HEK293T (cell line): ENCODE measurements at regions of chr5 and their contacts with region 1.

Region 1: DNA sequence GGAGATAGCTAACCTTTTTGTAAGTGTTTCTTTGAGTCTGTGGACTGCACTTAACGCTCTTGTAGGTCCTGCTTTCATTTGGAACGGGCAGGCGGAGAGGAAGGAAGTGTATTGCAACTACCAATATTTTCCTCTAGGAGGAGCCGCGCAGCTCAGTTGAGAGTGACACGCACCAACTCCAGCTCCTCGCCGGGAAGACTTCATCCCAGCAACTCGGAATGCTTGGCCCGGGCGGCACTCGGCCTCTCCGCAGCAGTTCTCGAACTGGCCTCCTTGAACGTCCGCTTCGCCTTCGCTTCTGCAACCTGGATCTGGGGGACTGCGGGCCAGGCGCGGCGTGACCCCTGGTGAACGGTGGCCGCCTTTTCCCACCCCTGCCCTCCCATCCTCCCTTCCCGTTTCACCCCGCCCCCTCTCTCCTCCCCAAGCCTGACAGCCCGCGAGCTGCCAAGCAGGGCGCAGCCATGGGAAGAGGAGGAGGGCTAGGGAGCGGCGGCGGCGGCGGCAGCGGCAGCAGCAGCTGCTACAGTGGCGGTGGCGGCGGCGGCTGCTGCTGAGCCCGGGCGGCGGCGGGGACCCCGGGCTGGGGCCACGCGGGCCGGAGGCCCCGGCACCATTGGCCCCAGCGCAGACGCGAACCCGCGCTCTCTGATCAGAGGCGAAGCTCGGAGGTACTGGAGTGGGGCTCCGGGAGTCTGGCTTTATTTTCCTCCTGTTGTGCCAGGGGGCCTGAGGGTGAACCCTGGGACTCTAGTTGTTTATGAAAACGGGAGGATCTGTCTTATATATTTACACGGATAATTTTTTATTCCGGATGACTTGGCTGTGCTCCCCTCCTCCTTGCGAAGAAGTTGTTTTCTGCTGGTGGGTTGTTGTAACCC is at the start of gene GHR:
- DNase-seq: peak; percentile 77

Region 2: DNA sequence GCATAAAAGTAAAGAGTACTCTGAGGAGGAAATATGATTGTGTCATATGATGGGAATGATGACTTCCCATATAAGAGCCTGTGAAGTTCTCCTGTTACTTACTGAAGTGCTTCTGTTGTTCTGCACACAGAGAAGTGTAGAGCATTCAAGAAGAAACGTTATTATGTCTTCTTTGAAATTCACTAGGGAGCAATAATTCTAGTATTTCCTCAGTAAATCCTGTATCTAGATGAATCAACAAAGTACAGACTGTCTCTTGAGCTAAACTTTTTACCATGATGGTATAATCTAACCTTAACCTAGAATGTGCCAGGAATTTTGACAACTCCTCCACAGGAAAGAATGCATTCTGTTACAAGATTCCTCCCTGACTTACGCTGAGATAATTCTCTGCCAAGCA is 19.2 kb before region 1 on chr5:
- CTCF ChIA-PET with region 1: interaction called, 11 read pairs
- POLR2A ChIA-PET with region 1: interaction called, 3 read pairs
- DNase-seq: no peak

Region 3: DNA sequence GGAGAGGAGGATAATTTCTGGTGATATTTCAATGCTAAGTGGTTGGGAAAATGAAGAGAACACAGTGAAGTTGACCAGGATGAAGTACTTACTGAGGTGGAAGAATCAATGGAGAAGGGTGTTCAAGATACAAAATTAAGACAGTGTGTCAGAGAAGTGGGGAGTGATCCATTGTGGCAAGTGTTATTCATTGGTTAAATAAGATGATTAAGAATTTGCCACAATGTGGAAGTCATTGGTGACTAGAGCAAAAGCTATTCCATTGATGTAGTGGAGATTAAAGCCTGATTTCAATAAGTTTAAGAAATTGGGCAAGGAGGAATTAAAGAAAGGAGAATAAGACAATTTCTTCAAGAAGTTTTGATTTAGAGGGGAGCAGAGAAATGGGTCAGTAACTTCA is 118.6 kb after region 1 on chr5:
- CTCF ChIA-PET with region 1: no interaction called
- POLR2A ChIA-PET with region 1: no interaction called
- DNase-seq: no peak

Region 4: GRCh38 chr5:42583322-42583721 is 159.8 kb after region 1 on chr5:
- CTCF ChIA-PET with region 1: interaction called, 18 read pairs
- POLR2A ChIA-PET with region 1: no interaction called
- DNase-seq: peak; percentile 61

Region 5: GRCh38 chr5:42666869-42667268 is 243.3 kb after region 1 on chr5:
- CTCF ChIA-PET with region 1: no interaction called
- POLR2A ChIA-PET with region 1: no interaction called
- DNase-seq: no peak

Region 6: DNA sequence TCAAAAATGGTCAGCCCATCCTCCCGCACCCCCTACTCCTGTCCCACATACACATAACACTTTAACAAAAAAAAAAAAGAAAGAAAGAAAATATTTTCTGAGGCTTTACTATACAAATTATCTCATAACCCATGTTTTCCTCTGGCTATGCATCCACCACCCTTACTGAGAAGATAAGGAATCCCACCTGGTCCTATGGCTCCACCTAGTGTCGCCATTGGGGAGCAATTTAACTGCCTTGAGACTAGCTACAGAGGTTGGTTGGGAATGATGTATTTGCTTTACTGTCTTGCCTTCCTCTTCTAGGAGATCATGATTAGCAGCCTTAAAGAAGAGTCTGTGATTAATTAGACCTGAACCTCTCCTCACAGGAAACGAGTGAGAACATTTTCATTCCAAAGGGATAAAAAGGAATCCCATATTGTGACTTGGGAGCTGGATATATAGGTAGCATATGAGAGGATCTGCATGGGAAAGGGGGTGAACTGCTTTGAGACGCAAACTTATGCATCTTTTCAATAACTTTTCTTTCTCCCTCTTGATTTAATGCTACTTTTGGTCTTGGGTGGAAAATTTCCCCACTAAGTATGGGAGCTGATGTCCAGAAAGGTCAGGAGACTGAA is 465.9 kb after region 1 on chr5:
- CTCF ChIA-PET with region 1: interaction called, 10 read pairs
- POLR2A ChIA-PET with region 1: no interaction called
- DNase-seq: peak; percentile 68